H1 (cell line): ENCODE measurements at regions of chr10 and their contacts with region 1.

Region 1: GRCh38 chr10:116765547-116766162 is 23.3 kb upstream of the HSPA12A start:
- DNase-seq: peak in 1 of 2 experiments; percentile 78
- H3K4me3 ChIP-seq: no peak overlapping the region
- H3K27ac ChIP-seq: no peak overlapping the region
- H3K4me1 ChIP-seq: peaks cover 0 to 7% (median 0%) of the 10 kb centered on the region in 4 experiments; a peak in 2 of 7 replicates
- H3K27me3 ChIP-seq: no peaks in the 10 kb centered on the region; a peak in 1 of 7 replicates
- CTCF ChIP-seq: peak; percentile 71 to 78 (median 74)
- EP300 ChIP-seq: no peak
- POLR2A ChIP-seq: no peak
- RAD21 ChIP-seq: peak; percentile 66 to 69

Region 2: DNA sequence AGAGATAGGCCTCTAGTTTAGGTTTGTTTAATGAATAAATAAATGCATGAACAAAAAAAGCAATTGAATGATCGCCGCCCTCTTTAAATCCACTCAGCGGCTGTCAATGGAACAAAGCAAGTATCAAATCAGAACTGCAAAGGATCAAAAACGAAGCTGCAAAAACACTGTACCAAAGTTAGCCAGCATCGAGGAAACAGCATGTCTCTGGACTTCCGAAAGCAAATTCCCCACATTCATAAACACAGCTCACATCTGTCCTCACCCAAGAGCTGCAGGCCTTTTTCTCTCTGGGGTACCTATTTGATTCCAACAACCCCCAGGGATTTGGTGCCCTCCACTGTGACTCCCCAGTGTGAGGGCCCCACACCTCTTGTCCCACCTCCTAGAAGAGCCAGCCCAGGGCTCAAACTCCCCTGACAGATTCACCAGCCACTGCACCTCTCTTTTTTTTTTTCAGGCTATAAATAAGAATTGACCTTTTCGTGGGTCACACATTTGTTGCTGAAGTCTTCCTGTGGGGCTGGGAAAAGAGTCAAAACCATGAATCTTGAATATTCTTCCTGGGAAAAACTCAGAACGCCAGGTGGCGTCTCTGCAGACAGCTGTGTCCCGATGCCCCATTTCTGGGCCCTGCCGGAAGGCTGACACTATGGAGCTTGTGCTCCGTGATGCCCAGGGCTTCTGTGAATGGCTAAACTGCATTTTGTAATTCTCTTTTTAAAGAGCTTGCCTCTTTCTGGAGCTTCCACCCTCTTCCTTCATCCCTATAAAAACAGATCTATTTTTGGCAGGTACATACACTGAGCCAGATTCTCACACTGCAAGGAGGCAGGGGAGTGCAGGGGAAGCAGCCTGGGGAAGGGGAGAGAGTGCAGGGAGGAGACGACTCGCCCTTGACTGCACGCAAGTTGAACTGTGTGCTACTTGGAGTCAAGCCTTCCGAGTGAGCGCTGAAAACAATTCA is 75.0 kb before region 1 on chr10:
- CTCF ChIA-PET with region 1: interaction called, 30 read pairs
- POLR2A ChIA-PET with region 1: no interaction called
- DNase-seq: peak in 1 of 2 experiments; percentile 57
- H3K4me3 ChIP-seq: peak overlapping the region in 3 of 4 experiments; percentile 19 to 33 (median 21); a peak in 2 of 8 replicates
- H3K27ac ChIP-seq: no peak overlapping the region
- H3K4me1 ChIP-seq: peaks cover 4 to 17% (median 8%) of the 10 kb centered on the region in 4 experiments; a peak in 6 of 7 replicates
- H3K27me3 ChIP-seq: no peaks in the 10 kb centered on the region; a peak in 3 of 7 replicates
- CTCF ChIP-seq: peak; percentile 45 to 62 (median 46)
- EP300 ChIP-seq: no peak
- POLR2A ChIP-seq: no peak
- RAD21 ChIP-seq: peak; percentile 49 to 60

Region 3: GRCh38 chr10:116748041-116748440 is 17.6 kb before region 1 on chr10:
- CTCF ChIA-PET with region 1: interaction called, 15 read pairs
- POLR2A ChIA-PET with region 1: no interaction called
- DNase-seq: no peak
- H3K4me3 ChIP-seq: no peak overlapping the region
- H3K27ac ChIP-seq: no peak overlapping the region
- H3K4me1 ChIP-seq: peaks cover 0 to 6% (median 0%) of the 10 kb centered on the region in 4 experiments; a peak in 2 of 7 replicates
- H3K27me3 ChIP-seq: peaks cover 1 to 23% (median 16%) of the 10 kb centered on the region in 4 experiments
- CTCF ChIP-seq: no peak
- EP300 ChIP-seq: no peak
- POLR2A ChIP-seq: no peak
- RAD21 ChIP-seq: no peak